CD14-positive monocyte (primary cell): ENCODE measurements at regions of chr16 and their contacts with region 1.

Region 1: GRCh38 chr16:46801428-46802049 is 29.4 kb downstream of the C16orf87 start:
- DNase-seq: peak in 1 of 3 donors; percentile 12
- H3K4me3 ChIP-seq: no peak overlapping the region
- H3K4me3 Mint-ChIP-seq: no peak overlapping the region
- H3K27ac ChIP-seq: no peak overlapping the region
- H3K27ac Mint-ChIP-seq: no peak overlapping the region
- H3K4me1 ChIP-seq: no peaks in the 10 kb centered on the region
- H3K4me1 Mint-ChIP-seq: no peaks in the 10 kb centered on the region
- H3K27me3 ChIP-seq: no peaks in the 10 kb centered on the region
- H3K27me3 Mint-ChIP-seq: no peaks in the 10 kb centered on the region
- CTCF ChIP-seq: peak; percentile 70

Region 2: DNA sequence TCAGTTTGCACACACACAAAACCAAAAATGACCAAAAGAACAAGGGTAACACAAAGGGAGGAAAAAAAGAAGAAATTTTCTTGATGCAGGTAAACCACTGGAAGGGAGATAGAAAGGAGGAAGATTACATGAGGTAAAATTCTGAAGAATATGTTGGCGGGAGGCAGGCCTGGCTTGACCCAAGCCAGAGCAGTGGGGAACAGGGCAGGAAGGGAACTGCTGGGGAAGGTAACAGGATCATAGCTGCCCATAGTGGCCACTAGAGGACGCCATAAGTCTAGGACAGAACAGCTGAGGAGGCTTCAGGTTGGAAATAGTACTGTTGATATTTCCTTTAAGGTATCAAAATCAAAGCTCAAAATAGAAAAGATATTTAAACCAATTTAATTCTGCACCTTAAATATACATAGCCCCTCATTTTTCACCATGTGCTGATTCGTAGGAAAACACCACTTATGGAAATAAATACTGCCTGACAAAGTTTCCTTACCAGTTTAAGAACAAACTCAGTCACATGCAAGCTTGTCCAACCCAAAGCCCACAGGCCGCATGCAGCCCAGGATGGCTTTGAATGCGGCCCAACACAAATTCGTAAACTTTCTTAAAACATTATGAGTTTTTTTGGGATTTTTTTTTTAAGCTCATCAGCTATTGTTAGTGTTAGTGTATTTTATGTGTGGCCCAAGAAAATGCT is 128.1 kb before region 1 on chr16:
- intact Hi-C with region 1: loop called in 1 of 2 experiments (anchors 5 kb)
- DNase-seq: peak; percentile 61 to 71 (median 69)
- H3K4me3 ChIP-seq: no peak overlapping the region
- H3K4me3 Mint-ChIP-seq: no peak overlapping the region
- H3K27ac ChIP-seq: peak overlapping the region in 1 of 2 donors; percentile 36
- H3K27ac Mint-ChIP-seq: peak overlapping the region in 3 of 7 donors; percentile 14 to 44 (median 22)
- H3K4me1 ChIP-seq: no peaks in the 10 kb centered on the region
- H3K4me1 Mint-ChIP-seq: no peaks in the 10 kb centered on the region
- H3K27me3 ChIP-seq: no peaks in the 10 kb centered on the region
- H3K27me3 Mint-ChIP-seq: no peaks in the 10 kb centered on the region
- CTCF ChIP-seq: peak; percentile 97